H1 (cell line): ENCODE measurements at regions of chr1 and their contacts with region 1.

Region 1: GRCh38 chr1:28510665-28511440 is 5.0 kb downstream of the RCC1 start:
- DNase-seq: no peak
- H3K4me3 ChIP-seq: no peak overlapping the region
- H3K27ac ChIP-seq: peak overlapping the region; percentile 95
- H3K4me1 ChIP-seq: peaks cover 5 to 17% (median 9%) of the 10 kb centered on the region in 4 experiments; a peak in 5 of 7 replicates
- H3K27me3 ChIP-seq: no peaks in the 10 kb centered on the region
- CTCF ChIP-seq: no peak
- EP300 ChIP-seq: no peak
- POLR2A ChIP-seq: peak; percentile 68 to 100
- RAD21 ChIP-seq: no peak

Region 2: DNA sequence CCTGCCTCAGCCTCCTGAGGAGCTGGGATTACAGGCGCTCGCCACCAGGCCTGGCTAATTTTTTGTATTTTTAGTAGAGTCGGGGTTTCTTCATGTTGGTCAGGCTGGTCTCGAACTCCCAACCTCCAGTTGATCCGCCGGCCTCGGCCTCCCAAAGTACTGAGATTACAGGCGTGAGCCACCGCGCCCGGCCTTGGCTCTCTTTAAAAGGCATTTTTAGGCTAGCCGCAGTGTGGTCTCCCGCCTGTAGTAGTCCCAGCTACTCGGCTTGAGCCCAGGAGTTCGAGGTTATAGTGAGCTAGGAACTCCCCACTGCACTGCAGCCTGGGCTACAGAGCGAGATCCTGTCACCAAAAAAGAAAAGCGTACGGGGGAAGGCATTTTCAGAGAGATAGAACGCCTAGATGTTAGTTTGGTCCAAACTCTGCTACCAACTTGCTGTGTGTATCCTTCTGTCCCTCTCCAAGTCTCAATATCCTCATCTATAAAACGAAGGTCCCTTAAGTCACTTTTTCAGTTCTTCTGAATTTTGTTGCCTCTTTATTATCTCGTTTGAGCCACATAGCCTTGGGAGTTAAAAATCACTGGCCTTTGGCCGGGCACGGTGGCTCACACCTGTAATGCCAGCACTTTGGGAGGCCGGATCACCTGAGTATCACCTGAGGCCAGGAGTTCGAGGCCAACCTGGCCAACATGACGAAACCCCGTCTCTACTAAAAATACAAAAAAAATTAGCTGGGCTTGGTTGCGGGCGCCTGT is 181.3 kb before region 1 on chr1:
- CTCF ChIA-PET with region 1: no interaction called
- POLR2A ChIA-PET with region 1: interaction called, 26 read pairs
- DNase-seq: peak in 1 of 2 experiments; percentile 56
- H3K4me3 ChIP-seq: peak overlapping the region; percentile 49 to 74 (median 72)
- H3K27ac ChIP-seq: peak overlapping the region; percentile 55; the same call in 1 of the 2 replicates
- H3K4me1 ChIP-seq: no peaks in the 10 kb centered on the region; a peak in 1 of 7 replicates
- H3K27me3 ChIP-seq: no peaks in the 10 kb centered on the region; a peak in 1 of 7 replicates
- CTCF ChIP-seq: peak in 2 of 3 experiments; percentile 6 to 22; a peak in 2 of 4 replicates
- EP300 ChIP-seq: no peak
- POLR2A ChIP-seq: no peak; a peak in 1 of 3 replicates
- RAD21 ChIP-seq: peak in 1 of 2 experiments; percentile 17; a peak in 1 of 4 replicates

Region 3: DNA sequence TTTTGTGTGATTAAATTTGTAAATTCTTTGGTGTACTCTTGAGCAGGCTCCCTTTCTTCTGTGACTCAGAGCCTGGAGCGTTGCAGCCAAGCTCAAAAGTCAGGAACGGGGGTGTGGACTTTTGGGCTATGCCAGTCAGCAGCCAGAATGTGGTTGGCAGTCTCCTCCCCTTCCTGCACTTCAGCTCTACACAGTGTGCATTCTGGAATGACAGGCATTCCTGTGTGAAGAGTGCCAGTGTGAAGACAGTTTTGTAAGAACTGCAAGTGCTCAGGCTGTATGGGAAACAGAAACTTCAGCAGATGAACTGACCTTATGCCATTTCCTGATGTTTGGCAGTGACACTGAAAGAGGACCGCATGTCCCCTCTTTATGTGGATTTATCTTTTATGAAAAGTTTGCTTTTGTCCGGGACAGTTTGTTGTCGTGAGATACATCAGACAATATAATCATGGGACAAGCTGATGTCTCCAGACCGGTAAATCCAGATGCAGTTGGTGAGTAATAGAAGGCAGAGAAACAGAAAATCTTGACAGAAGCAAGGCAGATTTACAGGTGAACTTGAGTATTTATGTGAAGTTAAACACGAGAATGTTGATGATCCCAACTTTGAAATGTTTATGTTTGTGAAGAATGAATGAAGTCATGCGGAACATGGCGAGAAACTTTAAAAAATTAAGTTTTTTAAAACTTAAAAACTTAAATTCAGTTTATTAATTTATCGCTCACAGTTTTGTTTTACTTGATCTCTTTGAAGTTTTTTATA is 72.7 kb before region 1 on chr1:
- CTCF ChIA-PET with region 1: no interaction called
- POLR2A ChIA-PET with region 1: interaction called, 17 read pairs
- DNase-seq: peak in 1 of 2 experiments; percentile 7
- H3K4me3 ChIP-seq: no peak overlapping the region
- H3K27ac ChIP-seq: no peak overlapping the region
- H3K4me1 ChIP-seq: peaks cover 0 to 9% (median 1%) of the 10 kb centered on the region in 4 experiments; a peak in 4 of 7 replicates
- H3K27me3 ChIP-seq: no peaks in the 10 kb centered on the region
- CTCF ChIP-seq: no peak
- EP300 ChIP-seq: no peak
- POLR2A ChIP-seq: no peak
- RAD21 ChIP-seq: no peak

Region 4: DNA sequence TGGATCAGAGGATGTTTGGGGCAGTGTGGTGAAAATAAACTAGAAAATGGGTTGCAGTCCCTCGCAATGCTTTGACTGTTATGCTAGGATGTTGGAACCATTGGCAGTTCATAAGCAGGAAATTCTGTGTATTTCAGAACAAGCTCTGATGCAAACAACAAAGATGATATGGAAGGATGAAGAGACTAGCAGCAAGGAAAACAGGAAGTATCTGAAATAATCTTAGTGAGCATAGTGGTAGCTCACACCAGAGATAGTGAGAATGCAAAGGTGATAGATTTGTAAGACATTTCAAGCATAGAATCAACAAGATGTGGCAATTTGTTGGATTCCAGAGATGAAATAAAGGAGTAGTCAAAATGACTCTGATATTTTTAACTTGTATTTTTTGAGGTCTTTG is 16.1 kb before region 1 on chr1:
- CTCF ChIA-PET with region 1: interaction called, 5 read pairs
- POLR2A ChIA-PET with region 1: interaction called, 40 read pairs
- DNase-seq: no peak
- H3K4me3 ChIP-seq: no peak overlapping the region
- H3K27ac ChIP-seq: no peak overlapping the region
- H3K4me1 ChIP-seq: no peaks in the 10 kb centered on the region
- H3K27me3 ChIP-seq: no peaks in the 10 kb centered on the region
- CTCF ChIP-seq: no peak
- EP300 ChIP-seq: no peak
- POLR2A ChIP-seq: no peak
- RAD21 ChIP-seq: no peak

Region 5: GRCh38 chr1:28540651-28541050 is 29.8 kb after region 1 on chr1:
- CTCF ChIA-PET with region 1: no interaction called
- POLR2A ChIA-PET with region 1: interaction called, 31 read pairs
- DNase-seq: no peak
- H3K4me3 ChIP-seq: no peak overlapping the region
- H3K27ac ChIP-seq: no peak overlapping the region
- H3K4me1 ChIP-seq: no peaks in the 10 kb centered on the region
- H3K27me3 ChIP-seq: no peaks in the 10 kb centered on the region; a peak in 1 of 7 replicates
- CTCF ChIP-seq: peak; percentile 20 to 36 (median 30); a peak in 3 of 4 replicates
- EP300 ChIP-seq: no peak
- POLR2A ChIP-seq: no peak
- RAD21 ChIP-seq: peak in 1 of 2 experiments; percentile 23; a peak in 1 of 4 replicates

Region 6: GRCh38 chr1:28736450-28737306 is 225.8 kb after region 1 on chr1 and contains the start of gene YTHDF2:
- CTCF ChIA-PET with region 1: no interaction called
- POLR2A ChIA-PET with region 1: interaction called, 29 read pairs
- DNase-seq: peak; percentile 94 to 97
- H3K4me3 ChIP-seq: peak within 1 kb of the TSS; percentile 88 to 97 (median 94)
- H3K27ac ChIP-seq: peak within 1 kb of the TSS; percentile 98
- H3K4me1 ChIP-seq: peaks cover 0 to 11% (median 3%) of the 10 kb centered on the region in 4 experiments; a peak in 6 of 7 replicates
- H3K27me3 ChIP-seq: no peaks in the 10 kb centered on the region
- CTCF ChIP-seq: peak; percentile 73 to 84 (median 83)
- EP300 ChIP-seq: peak in 1 of 2 experiments; percentile 76; a peak in 1 of 3 replicates
- POLR2A ChIP-seq: peak; percentile 27 to 91
- RAD21 ChIP-seq: peak; percentile 29 to 34
- total RNA-seq, gene YTHDF2: 159 and 164 TPM in 2 replicates

Region 7: GRCh38 chr1:28830814-28831213 is 320.0 kb after region 1 on chr1:
- CTCF ChIA-PET with region 1: no interaction called
- POLR2A ChIA-PET with region 1: no interaction called
- DNase-seq: no peak
- H3K4me3 ChIP-seq: no peak overlapping the region
- H3K27ac ChIP-seq: no peak overlapping the region
- H3K4me1 ChIP-seq: peaks cover 0 to 2% (median 0%) of the 10 kb centered on the region in 4 experiments; a peak in 3 of 7 replicates
- H3K27me3 ChIP-seq: no peaks in the 10 kb centered on the region
- CTCF ChIP-seq: no peak
- EP300 ChIP-seq: no peak
- POLR2A ChIP-seq: no peak
- RAD21 ChIP-seq: no peak